ENCODE measurements at regions of chr3 and their contacts with region 1.

Region 1: GRCh38 chr3:69200384-69201068 is 78.1 kb upstream of the LMOD3 start:
- DNase-seq: no peak
- ATAC-seq: peak; percentile 79

Region 2: GRCh38 chr3:69240651-69241568 is 40.4 kb after region 1 on chr3:
- intact Hi-C with region 1: loop called (anchors 5 kb)
- DNase-seq: no peak
- ATAC-seq: no peak

Region 3: DNA sequence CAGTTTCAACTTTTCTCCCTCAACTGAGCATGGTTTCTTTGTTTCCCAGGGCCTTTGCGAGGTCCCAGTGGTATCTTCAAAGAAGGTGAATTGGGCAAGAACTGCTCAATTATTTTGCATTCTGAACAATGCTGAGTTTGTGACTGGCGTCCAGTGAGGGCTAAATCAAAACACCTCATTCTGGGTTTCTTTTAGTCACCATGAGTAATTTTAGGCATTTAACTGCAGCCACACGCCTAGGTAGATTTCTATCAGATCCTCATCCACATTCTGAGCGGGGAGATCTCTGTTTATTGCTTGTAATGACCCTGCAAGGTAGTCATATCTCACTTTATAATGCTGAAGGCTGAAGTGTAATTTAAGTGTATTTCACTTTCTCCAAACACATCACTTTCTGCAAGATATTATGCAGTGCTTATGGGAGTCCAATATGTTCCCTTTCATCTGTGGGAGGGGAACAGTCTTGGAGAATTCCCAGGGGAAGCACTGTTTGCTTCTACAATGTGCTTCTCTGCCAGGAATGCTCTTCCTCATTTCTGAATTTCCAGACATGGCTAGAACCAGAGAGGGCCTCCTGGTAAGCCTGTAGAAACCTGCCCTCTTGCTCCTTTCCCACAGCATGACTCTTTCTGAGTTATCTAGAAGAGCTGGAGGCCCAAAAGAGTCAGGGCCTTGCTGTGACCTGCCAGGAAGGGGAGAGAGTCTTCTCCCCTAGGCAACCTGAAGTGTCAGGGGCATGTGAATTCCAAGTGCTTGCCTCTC is 93.7 kb after region 1 on chr3:
- intact Hi-C with region 1: loop called (anchors 5 kb)
- DNase-seq: no peak
- ATAC-seq: no peak

Region 4: DNA sequence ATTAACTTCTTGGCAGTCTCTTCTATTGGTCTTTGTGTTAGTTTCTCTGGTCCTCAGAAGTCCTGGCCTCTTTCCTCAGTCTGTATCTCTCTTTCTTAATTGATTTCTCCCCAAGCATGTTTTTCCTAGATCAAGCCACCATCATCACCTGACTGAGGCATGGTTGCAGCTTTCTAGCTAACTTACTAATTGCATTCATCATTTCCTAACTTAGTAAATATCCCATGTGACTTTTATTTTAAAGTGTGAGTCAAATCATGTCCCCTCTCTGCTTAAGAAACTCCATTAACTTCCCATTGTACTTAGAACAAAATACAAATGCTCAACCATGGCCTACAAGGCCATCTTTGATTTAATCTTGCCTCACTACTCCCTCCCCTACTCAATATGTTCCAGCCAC is 320.8 kb after region 1 on chr3:
- intact Hi-C with region 1: no loop called
- DNase-seq: no peak
- ATAC-seq: no peak